ENCODE measurements at regions of chr1 and their contacts with region 1.

Region 1: GRCh38 chr1:183471743-183472487 is 384 bp upstream of the SMG7 start:
- DNase-seq: peak; percentile 92 to 98 (median 96)
- ATAC-seq: peak; percentile 65
- H3K4me3 ChIP-seq: peak overlapping the region; percentile 83 to 86
- H3K4me3 Mint-ChIP-seq: peak overlapping the region; percentile 98
- H3K27ac ChIP-seq: peak overlapping the region; percentile 90 to 97
- H3K27ac Mint-ChIP-seq: peak overlapping the region; percentile 99
- H3K4me1 ChIP-seq: peaks cover 32% of the 10 kb centered on the region
- H3K4me1 Mint-ChIP-seq: peaks cover 24% of the 10 kb centered on the region
- H3K27me3 ChIP-seq: no peaks in the 10 kb centered on the region
- H3K27me3 Mint-ChIP-seq: no peaks in the 10 kb centered on the region
- CTCF ChIP-seq: no peak

Region 2: DNA sequence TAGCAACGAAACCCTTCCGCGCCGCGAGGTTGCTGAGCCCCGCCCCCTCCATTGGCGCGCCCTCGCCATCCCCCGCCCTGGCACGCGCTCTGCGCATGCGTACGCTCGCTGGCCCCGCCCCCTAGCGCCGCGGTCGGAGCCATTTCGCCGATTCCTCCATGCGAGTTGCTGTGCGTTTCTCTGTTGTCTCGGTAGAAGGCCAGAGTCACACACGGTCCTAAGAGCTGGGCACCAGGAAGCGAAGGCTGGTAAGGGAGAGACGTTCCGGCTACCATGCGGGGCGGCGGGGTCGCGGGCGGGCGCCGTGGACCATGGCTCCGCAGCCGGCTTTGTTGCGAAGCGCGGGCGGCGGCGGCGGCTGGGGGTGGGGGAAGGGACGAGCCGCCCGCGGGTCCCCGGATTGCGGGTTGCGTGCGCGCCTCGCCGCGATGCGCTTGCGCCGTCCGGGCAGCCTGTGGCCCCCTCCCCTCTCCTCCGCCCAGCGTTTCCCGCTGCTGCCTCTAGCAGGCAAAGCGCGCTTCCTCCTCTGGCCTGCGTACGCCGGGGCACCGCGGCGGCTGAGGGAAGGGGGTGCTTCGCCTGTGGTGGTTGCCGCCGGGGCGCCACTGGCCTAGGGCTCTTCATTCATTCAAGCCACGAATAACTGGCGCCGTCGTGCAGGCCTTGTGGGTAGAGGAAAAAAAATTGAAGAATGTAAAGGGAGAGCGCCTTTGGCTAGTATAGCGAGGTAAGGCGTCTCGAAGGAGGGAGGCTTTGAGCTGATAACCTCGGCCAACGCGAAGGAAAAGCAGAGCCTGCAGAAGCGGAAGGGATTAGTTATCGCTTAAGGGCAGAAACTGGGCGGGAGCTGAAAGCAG is 632.5 kb before region 1 on chr1 and contains the start of gene DHX9:
- CTCF ChIA-PET with region 1: no interaction called
- POLR2A ChIA-PET with region 1: no interaction called
- intact Hi-C with region 1: loop called (anchors 5 kb)
- DNase-seq: peak; percentile 93 to 99 (median 96)
- ATAC-seq: peak; percentile 84
- H3K4me3 ChIP-seq: peak within 1 kb of the TSS; percentile 69 to 87
- H3K4me3 Mint-ChIP-seq: peak within 1 kb of the TSS; percentile 95
- H3K27ac ChIP-seq: peak within 1 kb of the TSS; percentile 66 to 86
- H3K27ac Mint-ChIP-seq: peak within 1 kb of the TSS; percentile 98
- H3K4me1 ChIP-seq: peaks cover 36% of the 10 kb centered on the region
- H3K4me1 Mint-ChIP-seq: peaks cover 49% of the 10 kb centered on the region
- H3K27me3 ChIP-seq: no peaks in the 10 kb centered on the region
- H3K27me3 Mint-ChIP-seq: no peaks in the 10 kb centered on the region
- CTCF ChIP-seq: peak; percentile 28
- total RNA-seq, gene DHX9: 374 to 382 TPM

Region 3: DNA sequence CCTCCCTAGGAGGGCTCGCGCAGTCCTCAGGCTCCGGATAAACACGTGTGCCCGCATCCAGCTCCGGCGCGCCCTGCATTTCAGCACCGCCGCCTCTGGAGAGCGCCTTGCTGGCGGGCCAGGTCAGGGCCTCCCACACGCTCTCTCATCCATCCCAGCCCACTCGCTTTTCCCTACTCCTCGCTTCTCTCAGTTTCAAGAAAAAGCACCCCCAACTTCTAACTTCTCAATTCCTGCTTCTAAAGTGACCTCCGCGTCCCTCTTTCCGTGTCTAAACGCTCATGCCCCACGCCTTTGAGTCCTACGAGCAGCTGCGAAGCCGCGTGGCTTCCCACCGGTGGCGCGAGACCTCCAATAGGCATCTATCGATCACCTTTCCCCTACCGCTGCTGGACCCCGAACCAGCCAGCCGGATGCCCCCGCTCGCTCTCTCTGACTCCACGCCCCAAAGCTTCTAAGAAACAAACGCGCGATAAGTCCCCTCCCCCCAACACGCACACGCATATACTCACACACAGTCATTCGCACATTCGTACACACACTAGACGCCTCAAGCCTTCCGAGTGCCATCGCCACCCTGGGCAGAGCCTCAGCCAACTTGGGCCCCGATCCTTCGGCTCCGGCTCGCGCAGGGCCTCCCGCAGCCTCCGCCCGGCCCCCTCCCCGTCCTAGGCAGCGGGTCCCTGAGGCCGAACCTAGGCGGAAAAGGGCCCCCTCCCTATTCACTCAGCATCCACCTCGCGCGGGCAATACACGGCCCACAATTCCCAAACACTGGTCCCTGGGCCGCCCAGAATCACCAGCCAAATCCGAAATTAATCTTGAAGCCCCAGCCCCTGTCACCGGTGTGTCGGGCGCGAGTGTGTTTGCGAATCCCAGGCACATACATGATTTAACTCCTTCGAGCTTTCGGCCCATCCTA is 54.8 kb before region 1 on chr1:
- CTCF ChIA-PET with region 1: no interaction called
- POLR2A ChIA-PET with region 1: no interaction called
- intact Hi-C with region 1: no loop called
- DNase-seq: peak in 7 of 9 experiments; percentile 8 to 55 (median 25)
- ATAC-seq: peak; percentile 83
- H3K4me3 ChIP-seq: peak overlapping the region in 1 of 2 experiments; percentile 21
- H3K4me3 Mint-ChIP-seq: peak overlapping the region; percentile 66
- H3K27ac ChIP-seq: no peak overlapping the region
- H3K27ac Mint-ChIP-seq: no peak overlapping the region
- H3K4me1 ChIP-seq: peaks cover 22% of the 10 kb centered on the region
- H3K4me1 Mint-ChIP-seq: peaks cover 27% of the 10 kb centered on the region
- H3K27me3 ChIP-seq: peaks cover 22 to 29% of the 10 kb centered on the region in 2 experiments
- H3K27me3 Mint-ChIP-seq: peaks cover 55% of the 10 kb centered on the region
- CTCF ChIP-seq: no peak

Region 4: DNA sequence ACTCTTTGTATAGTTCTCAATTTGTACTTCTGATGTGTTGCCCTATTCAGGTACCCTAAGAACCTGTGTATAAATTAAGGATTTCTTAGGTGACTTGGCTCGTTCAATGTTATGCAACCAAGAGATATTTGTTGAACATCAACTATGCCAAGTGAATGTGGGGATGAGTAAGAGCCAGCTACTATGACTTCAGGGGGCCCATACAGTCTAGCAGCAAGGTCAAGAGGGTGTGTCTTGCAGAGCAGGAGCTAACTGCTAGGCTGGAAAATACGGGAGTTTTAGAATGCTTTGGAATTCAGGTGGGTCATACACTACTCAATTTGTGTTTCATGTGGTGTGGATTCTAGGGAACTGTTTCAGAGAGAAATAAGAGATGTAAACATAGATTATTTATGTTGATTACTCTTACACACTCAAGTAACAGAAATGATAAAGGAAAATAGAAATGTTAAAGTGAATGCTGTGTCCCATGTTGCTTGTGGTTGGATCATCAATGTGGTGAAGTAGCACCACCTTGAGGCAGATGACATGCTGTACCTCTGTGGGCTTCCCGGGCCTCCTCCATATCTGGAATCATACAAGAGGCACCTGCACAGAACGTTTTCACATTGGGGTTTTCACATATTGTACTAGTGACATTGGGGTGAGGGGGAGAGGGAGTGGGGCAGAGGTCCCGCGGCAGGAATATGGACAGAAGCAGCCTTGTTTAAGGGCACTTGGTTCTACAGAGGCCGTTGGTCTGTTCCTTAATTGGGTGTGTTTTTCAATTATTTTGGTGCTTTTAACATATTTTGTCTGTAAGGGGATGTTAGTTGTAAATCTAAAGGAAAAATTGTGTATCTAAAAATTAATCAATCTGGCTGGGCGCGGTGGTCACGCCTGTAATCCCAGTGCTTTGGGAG is 151.2 kb after region 1 on chr1:
- CTCF ChIA-PET with region 1: interaction called, 4 read pairs
- POLR2A ChIA-PET with region 1: no interaction called
- intact Hi-C with region 1: loop called (anchors 1 to 2 kb)
- DNase-seq: peak in 8 of 9 experiments; percentile 13 to 72 (median 52)
- ATAC-seq: peak; percentile 99
- H3K4me3 ChIP-seq: no peak overlapping the region
- H3K4me3 Mint-ChIP-seq: no peak overlapping the region
- H3K27ac ChIP-seq: no peak overlapping the region
- H3K27ac Mint-ChIP-seq: peak overlapping the region; percentile 89
- H3K4me1 ChIP-seq: peaks cover 6% of the 10 kb centered on the region
- H3K4me1 Mint-ChIP-seq: peaks cover 38% of the 10 kb centered on the region
- H3K27me3 ChIP-seq: no peaks in the 10 kb centered on the region
- H3K27me3 Mint-ChIP-seq: no peaks in the 10 kb centered on the region
- CTCF ChIP-seq: peak; percentile 51

Region 5: GRCh38 chr1:184051485-184052193 is 579.7 kb after region 1 on chr1 and contains the start of gene TSEN15:
- CTCF ChIA-PET with region 1: no interaction called
- POLR2A ChIA-PET with region 1: no interaction called
- intact Hi-C with region 1: loop called (anchors 2 to 5 kb)
- DNase-seq: peak; percentile 49 to 89 (median 76)
- ATAC-seq: peak; percentile 95
- H3K4me3 ChIP-seq: peak within 1 kb of the TSS; percentile 86 to 94
- H3K4me3 Mint-ChIP-seq: peak within 1 kb of the TSS; percentile 98
- H3K27ac ChIP-seq: peak within 1 kb of the TSS; percentile 66 to 78
- H3K27ac Mint-ChIP-seq: peak within 1 kb of the TSS; percentile 98
- H3K4me1 ChIP-seq: peaks cover 21% of the 10 kb centered on the region
- H3K4me1 Mint-ChIP-seq: peaks cover 47% of the 10 kb centered on the region
- H3K27me3 ChIP-seq: no peaks in the 10 kb centered on the region
- H3K27me3 Mint-ChIP-seq: peaks cover 14% of the 10 kb centered on the region
- CTCF ChIP-seq: no peak
- total RNA-seq, gene TSEN15: 14.8 to 15.9 TPM

Region 6: DNA sequence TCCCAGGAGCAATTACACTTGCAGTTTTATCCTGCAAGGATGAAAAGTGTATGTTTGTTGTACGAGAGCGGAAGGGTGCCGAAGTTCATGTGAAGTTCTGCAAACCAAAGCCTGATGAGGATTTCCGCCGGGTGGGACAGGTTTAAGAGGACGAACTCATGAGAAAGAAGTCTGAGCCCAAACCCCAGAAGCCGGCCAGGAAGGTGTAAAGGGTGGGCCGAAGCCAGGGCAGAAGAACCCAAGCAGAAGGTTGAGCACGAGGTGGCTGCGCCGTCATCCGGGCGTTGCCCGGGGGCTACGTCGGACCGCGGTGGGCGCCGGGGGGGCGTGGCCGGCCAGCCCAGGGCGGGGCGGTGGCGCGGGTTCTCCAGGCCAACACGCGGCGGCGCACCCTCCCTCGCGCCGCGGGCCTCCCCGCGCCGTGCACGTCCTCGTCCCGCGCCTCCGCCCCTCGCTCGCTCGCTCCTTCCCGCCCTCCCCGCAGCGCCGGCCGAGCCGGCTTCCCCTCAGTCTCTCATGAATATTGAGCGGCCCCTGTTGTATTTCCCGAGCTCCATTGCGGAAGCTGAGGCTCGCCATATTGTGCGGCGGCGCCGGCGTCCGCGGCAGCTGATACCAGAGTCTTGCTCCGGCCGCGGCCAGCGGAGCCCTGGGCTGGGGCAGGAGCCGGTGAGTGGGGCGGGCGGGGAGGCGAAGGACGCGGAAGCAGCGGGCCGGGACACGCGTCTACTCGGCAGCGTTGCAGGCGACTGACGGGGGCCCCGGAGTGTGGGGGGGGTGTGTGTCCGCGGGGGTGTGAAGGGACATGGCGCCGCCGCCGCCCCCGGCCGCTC is 1573.3 kb after region 1 on chr1 and contains the start of gene RNF2:
- CTCF ChIA-PET with region 1: no interaction called
- POLR2A ChIA-PET with region 1: no interaction called
- intact Hi-C with region 1: loop called (anchors 10 kb)
- DNase-seq: peak; percentile 61 to 95 (median 84)
- ATAC-seq: peak; percentile 91
- H3K4me3 ChIP-seq: peak within 1 kb of the TSS; percentile 74 to 85
- H3K4me3 Mint-ChIP-seq: peak within 1 kb of the TSS; percentile 92
- H3K27ac ChIP-seq: peak within 1 kb of the TSS; percentile 62 to 81
- H3K27ac Mint-ChIP-seq: peak within 1 kb of the TSS; percentile 93
- H3K4me1 ChIP-seq: peaks cover 23% of the 10 kb centered on the region
- H3K4me1 Mint-ChIP-seq: peaks cover 46% of the 10 kb centered on the region
- H3K27me3 ChIP-seq: no peaks in the 10 kb centered on the region
- H3K27me3 Mint-ChIP-seq: no peaks in the 10 kb centered on the region
- CTCF ChIP-seq: no peak
- total RNA-seq, gene RNF2: 13.3 to 13.6 TPM

Measured in CD8-positive, alpha-beta T cell (primary cell).